ENCODE measurements at regions of chr15 and their contacts with region 1.

Region 1: DNA sequence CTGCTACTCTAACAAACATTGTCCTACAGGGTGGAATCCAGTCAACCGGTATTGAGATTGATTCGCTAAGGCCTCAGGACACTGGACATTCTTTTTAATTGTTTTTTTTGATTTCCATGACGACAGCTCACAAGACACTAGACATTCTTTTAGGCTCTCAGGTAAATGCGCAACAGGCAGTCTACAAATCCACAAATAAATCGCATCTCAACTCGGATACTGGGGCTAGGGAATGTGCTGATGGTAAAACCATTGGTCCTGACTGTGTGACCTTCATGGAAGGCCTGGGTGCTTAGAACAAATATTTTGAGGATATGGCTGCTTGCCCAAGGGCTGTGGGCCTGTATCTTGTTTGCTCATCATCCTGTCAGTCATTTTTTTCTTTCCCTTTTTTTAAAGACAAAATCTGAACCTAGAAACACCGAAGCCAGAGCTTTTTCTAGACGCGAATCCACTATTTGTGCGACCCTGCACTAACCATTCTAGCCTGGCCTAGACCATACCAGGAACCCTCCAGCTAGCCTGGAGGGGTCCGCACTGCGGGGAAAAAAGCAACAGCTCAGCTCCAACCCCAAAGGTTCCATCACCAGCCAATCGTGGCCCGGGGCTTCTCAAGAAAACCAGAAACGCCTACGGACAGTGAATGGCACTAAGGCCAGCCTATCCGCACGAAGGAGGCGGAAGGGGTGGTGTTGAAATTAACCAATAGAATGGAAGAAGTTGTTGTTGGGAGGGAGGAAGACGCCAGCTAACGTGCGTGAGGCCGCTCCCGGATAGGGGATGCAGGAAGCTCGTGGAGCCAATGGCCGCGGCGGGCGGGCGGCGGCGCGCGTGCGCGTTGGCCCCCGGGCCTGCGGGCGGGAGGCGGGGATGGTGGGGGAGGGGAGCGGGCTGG is 18.1 kb upstream of the CHD2 start:
- DNase-seq: peak; percentile 98
- H3K4me3 Mint-ChIP-seq: peak overlapping the region; percentile 87
- H3K27ac Mint-ChIP-seq: peak overlapping the region; percentile 97
- H3K4me1 Mint-ChIP-seq: peaks cover 57% of the 10 kb centered on the region
- H3K27me3 Mint-ChIP-seq: no peaks in the 10 kb centered on the region

Region 2: DNA sequence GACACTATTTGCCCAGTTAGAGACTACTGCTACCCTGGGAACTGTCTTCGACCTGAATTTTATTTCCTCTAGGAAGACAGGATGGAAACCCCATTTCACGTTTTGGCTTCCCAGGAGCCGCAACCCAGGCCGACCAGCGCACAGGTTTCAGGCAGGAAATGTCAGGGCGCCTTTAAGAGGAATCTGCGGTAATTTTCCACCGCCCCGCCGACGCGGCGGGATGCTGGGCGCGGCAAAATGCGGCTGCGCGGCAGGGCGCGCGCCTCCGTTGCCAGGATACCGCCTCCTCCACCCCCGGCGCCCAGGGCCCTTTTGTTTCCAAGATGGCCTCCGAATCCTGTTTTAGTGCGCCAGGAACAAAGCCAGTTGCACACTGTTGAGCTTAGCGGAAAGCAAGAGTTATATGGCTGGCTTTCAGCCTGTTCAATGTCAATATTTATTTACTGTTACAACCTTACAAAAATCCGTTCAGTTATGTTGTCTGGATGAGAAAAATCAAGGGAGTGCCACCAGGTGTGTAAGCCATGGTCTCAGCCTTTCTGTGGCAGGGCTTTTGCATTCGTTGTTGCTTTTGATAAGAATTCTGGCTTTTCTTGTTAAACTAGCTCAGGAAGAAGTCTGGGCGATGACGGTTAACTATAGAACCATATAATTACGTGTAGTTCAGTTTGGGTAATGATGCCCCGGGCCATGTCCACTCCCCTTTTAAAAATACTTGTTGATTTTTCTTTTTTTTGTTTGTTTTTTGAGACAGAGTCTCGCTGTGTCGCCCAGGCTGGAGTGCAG is 61.6 kb before region 1 on chr15:
- intact Hi-C with region 1: loop called (anchors 1 kb)
- DNase-seq: peak; percentile 83
- H3K4me3 Mint-ChIP-seq: peak overlapping the region; percentile 82
- H3K27ac Mint-ChIP-seq: peak overlapping the region; percentile 94
- H3K4me1 Mint-ChIP-seq: peaks cover 47% of the 10 kb centered on the region
- H3K27me3 Mint-ChIP-seq: no peaks in the 10 kb centered on the region

Region 3: GRCh38 chr15:92831655-92832328 is 50.3 kb before region 1 on chr15:
- intact Hi-C with region 1: loop called (anchors 1 kb)
- DNase-seq: peak; percentile 89
- H3K4me3 Mint-ChIP-seq: peak overlapping the region; percentile 61
- H3K27ac Mint-ChIP-seq: peak overlapping the region; percentile 95
- H3K4me1 Mint-ChIP-seq: peaks cover 40% of the 10 kb centered on the region
- H3K27me3 Mint-ChIP-seq: no peaks in the 10 kb centered on the region

Region 4: GRCh38 chr15:92845126-92845508 is 36.9 kb before region 1 on chr15:
- intact Hi-C with region 1: loop called (anchors 2 kb)
- DNase-seq: no peak
- H3K4me3 Mint-ChIP-seq: peak overlapping the region; percentile 61
- H3K27ac Mint-ChIP-seq: peak overlapping the region; percentile 94
- H3K4me1 Mint-ChIP-seq: peaks cover 44% of the 10 kb centered on the region
- H3K27me3 Mint-ChIP-seq: no peaks in the 10 kb centered on the region

Region 5: DNA sequence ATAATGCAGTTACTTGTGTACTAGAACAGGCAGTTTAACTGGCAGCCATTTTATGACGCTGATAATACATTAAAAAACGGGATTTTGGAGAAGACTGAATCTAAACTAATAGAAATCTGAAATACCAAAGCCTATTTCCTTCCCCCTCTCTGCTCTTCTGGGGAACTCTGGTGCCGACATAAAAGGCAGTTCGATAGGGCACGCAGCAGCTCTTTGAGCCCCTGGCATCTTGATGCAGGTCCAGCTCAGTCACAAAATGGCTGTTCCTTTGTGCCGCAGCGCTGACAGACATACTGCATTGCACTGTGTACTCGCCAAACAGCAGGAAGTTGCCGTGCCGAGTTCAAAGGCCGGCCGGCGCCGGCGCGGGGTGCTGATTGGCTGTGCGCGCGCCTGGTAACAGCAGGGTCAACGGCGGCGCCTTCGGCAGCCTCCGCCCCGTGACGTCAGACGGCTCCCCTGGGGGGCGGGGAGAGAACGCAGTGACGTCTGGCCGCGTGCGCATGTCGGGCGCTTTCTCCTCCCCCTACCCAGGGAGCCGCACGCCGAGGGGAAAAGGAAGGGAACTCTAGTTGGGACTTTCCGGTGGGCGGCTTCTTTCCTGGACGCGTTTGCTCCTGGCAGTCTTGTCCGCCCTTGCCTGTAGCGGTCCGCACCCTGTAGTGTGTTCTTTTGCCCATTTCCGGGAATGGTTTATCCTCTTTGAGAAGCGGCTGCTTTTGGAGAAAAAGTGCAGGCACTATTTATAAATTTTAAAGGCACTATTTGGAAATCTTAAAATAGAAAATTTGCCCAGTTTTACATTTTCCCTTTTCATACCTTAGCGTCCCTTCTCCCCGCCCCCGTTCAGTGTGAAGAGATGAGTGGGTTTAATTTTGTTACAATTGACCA is 22.1 kb after region 1 on chr15:
- intact Hi-C with region 1: loop called (anchors 1 kb)
- DNase-seq: peak; percentile 99
- H3K4me3 Mint-ChIP-seq: peak overlapping the region; percentile 94
- H3K27ac Mint-ChIP-seq: peak overlapping the region; percentile 100
- H3K4me1 Mint-ChIP-seq: peaks cover 57% of the 10 kb centered on the region
- H3K27me3 Mint-ChIP-seq: no peaks in the 10 kb centered on the region

Region 6: GRCh38 chr15:92917606-92918407 is 35.8 kb after region 1 on chr15:
- intact Hi-C with region 1: loop called (anchors 5 kb)
- DNase-seq: peak; percentile 87
- H3K4me3 Mint-ChIP-seq: peak overlapping the region; percentile 33
- H3K27ac Mint-ChIP-seq: peak overlapping the region; percentile 82
- H3K4me1 Mint-ChIP-seq: peaks cover 77% of the 10 kb centered on the region
- H3K27me3 Mint-ChIP-seq: no peaks in the 10 kb centered on the region

Region 7: DNA sequence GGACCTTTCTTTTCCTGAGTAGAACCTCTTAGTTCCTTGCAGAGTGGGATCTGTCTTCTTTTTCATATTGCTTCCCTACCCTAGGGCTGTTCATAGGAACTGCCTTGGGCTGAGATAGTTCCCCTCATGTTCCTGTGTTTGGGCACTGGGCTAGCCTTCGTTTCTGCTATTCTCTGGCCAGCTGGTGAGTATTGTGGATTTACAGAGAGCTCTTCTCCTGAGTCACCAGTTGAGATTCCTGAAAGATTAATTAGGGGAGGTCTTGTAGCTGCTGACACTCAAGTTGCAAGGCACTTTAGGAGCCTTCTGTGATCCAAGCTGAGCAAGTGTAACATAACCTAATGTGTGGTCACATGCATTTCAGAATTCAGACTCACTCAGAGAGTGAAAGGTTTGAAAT is 48.7 kb after region 1 on chr15:
- intact Hi-C with region 1: no loop called
- DNase-seq: no peak
- H3K4me3 Mint-ChIP-seq: no peak overlapping the region
- H3K27ac Mint-ChIP-seq: peak overlapping the region; percentile 31
- H3K4me1 Mint-ChIP-seq: peaks cover 39% of the 10 kb centered on the region
- H3K27me3 Mint-ChIP-seq: no peaks in the 10 kb centered on the region

Measured in activated T-helper 2 cell treated with anti-CD3 and anti-CD28 coated beads, Interferon-gamma antibody, Interleukin-2, Interleukin-4, amounts not matched to agents 10 μg/mL and 5 μg/mL and 100 μg/mL, durations not matched to agents 14 hours and 24 hours and 36 hours (primary cell).